ENCODE measurements at regions of chr2 and their contacts with region 1.

Region 1: GRCh38 chr2:69306822-69307578 is 80.0 kb downstream of the GFPT1 start:
- DNase-seq: peak; percentile 93
- H3K4me3 ChIP-seq: peak overlapping the region; percentile 46 to 64 (median 60)
- H3K27ac ChIP-seq: peak overlapping the region; percentile 80 to 90 (median 84)
- H3K4me1 ChIP-seq: peaks cover 0 to 65% (median 50%) of the 10 kb centered on the region in 4 donors
- H3K27me3 ChIP-seq: no peaks in the 10 kb centered on the region
- CTCF ChIP-seq: peak; percentile 69 to 93 (median 82)
- EP300 ChIP-seq: no peak
- POLR2A ChIP-seq: no peak

Region 2: GRCh38 chr2:68943581-68944568 is 363.1 kb before region 1 on chr2:
- intact Hi-C with region 1: loop called (anchors 5 kb)
- DNase-seq: peak; percentile 78
- H3K4me3 ChIP-seq: no peak overlapping the region
- H3K27ac ChIP-seq: peak overlapping the region in 1 of 4 donors; percentile 15
- H3K4me1 ChIP-seq: peaks cover 0 to 8% (median 1%) of the 10 kb centered on the region in 4 donors
- H3K27me3 ChIP-seq: no peaks in the 10 kb centered on the region
- CTCF ChIP-seq: peak; percentile 48 to 84 (median 68)
- EP300 ChIP-seq: no peak
- POLR2A ChIP-seq: no peak

Region 3: DNA sequence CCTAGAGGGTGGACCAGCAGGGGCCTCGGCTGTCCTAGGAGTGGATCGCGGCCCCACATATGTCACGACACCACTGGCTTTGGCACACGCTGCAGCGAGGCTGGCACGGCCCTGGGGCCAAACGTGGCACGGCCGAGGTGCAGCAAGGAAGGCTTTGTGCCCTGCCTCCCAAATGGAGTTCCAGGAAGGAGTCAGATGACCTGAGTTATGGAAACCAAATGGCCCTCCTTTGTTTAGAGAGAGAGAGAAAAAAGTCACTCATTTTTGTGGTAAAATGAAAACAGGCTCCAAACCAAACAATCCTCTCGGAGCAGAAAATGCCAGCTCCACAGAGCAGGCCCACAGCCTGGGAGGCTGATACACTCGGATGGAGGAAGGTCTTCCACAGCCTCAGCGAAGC is 188.4 kb before region 1 on chr2:
- intact Hi-C with region 1: loop called (anchors 5 kb)
- DNase-seq: peak; percentile 71
- H3K4me3 ChIP-seq: no peak overlapping the region
- H3K27ac ChIP-seq: peak overlapping the region; percentile 65 to 81 (median 78)
- H3K4me1 ChIP-seq: peaks cover 0 to 39% (median 28%) of the 10 kb centered on the region in 4 donors
- H3K27me3 ChIP-seq: no peaks in the 10 kb centered on the region
- CTCF ChIP-seq: no peak
- EP300 ChIP-seq: no peak
- POLR2A ChIP-seq: no peak

Region 4: GRCh38 chr2:69177785-69178636 is 129.0 kb before region 1 on chr2:
- intact Hi-C with region 1: loop called (anchors 2 kb)
- DNase-seq: peak; percentile 97
- H3K4me3 ChIP-seq: peak overlapping the region in 2 of 4 donors; percentile 12 to 13
- H3K27ac ChIP-seq: peak overlapping the region; percentile 75 to 90 (median 85)
- H3K4me1 ChIP-seq: peaks cover 0 to 55% (median 34%) of the 10 kb centered on the region in 4 donors
- H3K27me3 ChIP-seq: no peaks in the 10 kb centered on the region
- CTCF ChIP-seq: no peak
- EP300 ChIP-seq: peak in 3 of 4 donors; percentile 26 to 76 (median 70)
- POLR2A ChIP-seq: no peak

Region 5: GRCh38 chr2:69386789-69387734 is 80.1 kb after region 1 on chr2 and contains the start of gene GFPT1:
- intact Hi-C with region 1: loop called (anchors 5 kb)
- DNase-seq: peak; percentile 96
- H3K4me3 ChIP-seq: peak within 1 kb of the TSS; percentile 78 to 99 (median 88)
- H3K27ac ChIP-seq: peak within 1 kb of the TSS; percentile 82 to 91 (median 88)
- H3K4me1 ChIP-seq: peaks cover 0 to 41% (median 21%) of the 10 kb centered on the region in 4 donors
- H3K27me3 ChIP-seq: no peaks in the 10 kb centered on the region
- CTCF ChIP-seq: no peak
- EP300 ChIP-seq: no peak
- POLR2A ChIP-seq: peak; percentile 16 to 28
- total RNA-seq, gene GFPT1: 14.5 to 24.4 (median 18.7) TPM